Activated CD4-positive, alpha-beta T cell treated with anti-CD3 and anti-CD28 coated beads for 36 hours (primary cell): ENCODE measurements at regions of chr3 and their contacts with region 1.

Region 1: GRCh38 chr3:196942226-196942914 is at the start of gene NCBP2:
- DNase-seq: peak; percentile 100
- ATAC-seq: peak; percentile 97
- H3K4me3 Mint-ChIP-seq: peak within 1 kb of the TSS; percentile 93
- H3K27ac Mint-ChIP-seq: peak within 1 kb of the TSS; percentile 99
- H3K4me1 Mint-ChIP-seq: peaks cover 45% of the 10 kb centered on the region
- H3K27me3 Mint-ChIP-seq: no peaks in the 10 kb centered on the region
- total RNA-seq, gene NCBP2: 94.8 to 107 TPM

Region 2: GRCh38 chr3:196081791-196082618 is 860.4 kb before region 1 on chr3 and contains the start of gene TFRC:
- CTCF ChIA-PET with region 1: no interaction called
- POLR2A ChIA-PET with region 1: no interaction called
- intact Hi-C with region 1: loop called in 1 of 2 experiments (anchors 2 kb)
- DNase-seq: peak; percentile 98
- ATAC-seq: peak; percentile 92
- H3K4me3 Mint-ChIP-seq: peak within 1 kb of the TSS; percentile 95
- H3K27ac Mint-ChIP-seq: peak within 1 kb of the TSS; percentile 93
- H3K4me1 Mint-ChIP-seq: peaks cover 30% of the 10 kb centered on the region
- H3K27me3 Mint-ChIP-seq: no peaks in the 10 kb centered on the region
- total RNA-seq, gene TFRC: 373 to 520 TPM

Region 3: GRCh38 chr3:196632046-196632751 is 310.2 kb before region 1 on chr3:
- CTCF ChIA-PET with region 1: no interaction called
- POLR2A ChIA-PET with region 1: interaction called, 3 read pairs
- intact Hi-C with region 1: loop called in 1 of 2 experiments (anchors 5 kb)
- DNase-seq: peak; percentile 93
- ATAC-seq: peak; percentile 80
- H3K4me3 Mint-ChIP-seq: peak overlapping the region; percentile 81
- H3K27ac Mint-ChIP-seq: peak overlapping the region; percentile 95
- H3K4me1 Mint-ChIP-seq: peaks cover 55% of the 10 kb centered on the region
- H3K27me3 Mint-ChIP-seq: no peaks in the 10 kb centered on the region

Region 4: DNA sequence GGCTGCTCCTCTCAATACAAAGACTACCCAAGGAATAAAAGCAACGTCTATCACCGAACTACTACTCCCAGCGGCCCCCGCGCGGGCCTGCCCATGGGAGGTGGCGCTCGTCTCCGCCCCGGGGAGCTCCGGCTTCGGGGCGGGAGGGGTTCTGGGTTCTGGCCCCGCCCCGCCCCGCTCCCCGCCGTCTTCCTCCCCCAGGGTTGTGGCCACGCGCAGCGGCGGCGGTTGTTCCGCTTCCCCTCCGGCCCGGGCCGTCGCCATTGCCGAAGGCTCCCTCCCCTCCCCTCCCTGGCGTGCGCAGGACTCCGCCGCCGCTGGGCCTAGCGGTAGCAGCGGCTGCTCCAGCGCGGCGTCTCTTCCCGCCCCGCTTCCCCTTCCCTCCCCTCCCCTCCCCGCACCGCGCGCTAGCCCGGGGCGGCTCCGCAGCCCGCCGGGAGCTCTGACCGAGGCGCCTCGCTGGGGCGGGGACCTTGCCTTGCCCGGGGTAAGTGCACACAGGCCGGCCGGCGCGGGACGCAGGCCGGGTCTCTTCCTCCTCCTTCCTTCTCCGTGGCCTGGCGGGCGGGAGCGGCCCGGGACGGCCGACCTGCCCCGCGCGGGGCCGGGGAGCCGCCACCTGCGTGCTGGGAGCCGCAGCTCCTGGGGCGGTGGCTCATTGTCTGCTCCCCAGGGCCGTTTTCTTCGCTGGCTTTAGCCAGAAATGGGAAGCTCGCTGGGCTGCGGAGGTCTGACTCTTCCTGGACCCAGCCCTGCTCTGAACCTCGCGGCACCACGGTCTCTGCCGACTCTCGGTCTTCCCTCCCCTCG is 202.5 kb before region 1 on chr3 and contains the start of gene PAK2:
- CTCF ChIA-PET with region 1: no interaction called
- POLR2A ChIA-PET with region 1: no interaction called
- intact Hi-C with region 1: loop called in 1 of 2 experiments (anchors 1 kb)
- DNase-seq: peak; percentile 94
- ATAC-seq: peak; percentile 92
- H3K4me3 Mint-ChIP-seq: peak within 1 kb of the TSS; percentile 93
- H3K27ac Mint-ChIP-seq: peak within 1 kb of the TSS; percentile 99
- H3K4me1 Mint-ChIP-seq: peaks cover 25% of the 10 kb centered on the region
- H3K27me3 Mint-ChIP-seq: no peaks in the 10 kb centered on the region
- total RNA-seq, gene PAK2: 57.6 to 82.2 TPM

Region 5: DNA sequence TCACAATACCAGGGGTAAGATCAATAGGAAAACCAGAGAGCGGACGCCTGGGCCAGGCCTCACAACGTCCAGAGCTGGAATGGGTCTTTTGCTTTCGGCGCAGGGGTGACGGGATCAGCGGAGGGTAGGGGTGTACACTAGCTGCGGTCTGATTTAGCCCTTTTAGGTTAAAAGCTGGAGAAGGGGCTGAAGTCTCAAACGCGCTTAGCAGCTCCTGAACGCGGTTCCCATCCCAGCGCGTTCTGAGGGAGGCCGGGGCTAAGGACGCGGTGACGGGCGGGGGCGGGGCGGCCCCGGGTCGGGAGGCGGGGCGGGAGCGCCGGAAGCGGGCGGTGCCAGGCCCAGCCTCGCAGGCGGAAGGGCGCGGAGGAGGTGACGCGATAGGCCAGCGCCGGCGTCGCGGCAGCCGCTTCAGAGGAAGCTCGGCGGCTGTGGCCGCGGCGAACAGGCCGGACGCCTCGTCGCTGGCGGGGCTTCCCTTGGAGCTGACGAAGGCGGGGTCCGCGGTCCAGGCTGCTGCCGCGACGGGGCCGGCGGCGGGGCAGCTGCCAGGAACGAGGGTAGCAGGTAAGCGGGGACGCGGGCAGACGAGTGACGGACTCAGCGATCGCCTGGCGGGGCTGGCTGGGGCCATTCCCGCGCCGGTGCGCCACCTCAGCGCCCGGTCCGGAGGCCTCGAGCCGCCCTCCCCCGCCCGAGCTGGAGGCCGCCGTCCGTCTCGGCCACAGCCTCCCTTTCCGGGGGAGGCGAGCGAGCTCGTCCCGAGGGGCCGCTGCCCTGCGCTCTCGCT is 74.7 kb before region 1 on chr3 and contains the start of gene SENP5:
- CTCF ChIA-PET with region 1: interaction called, 18 read pairs
- POLR2A ChIA-PET with region 1: interaction called, 14 read pairs
- intact Hi-C with region 1: loop called (anchors 1 kb)
- DNase-seq: peak; percentile 95
- ATAC-seq: peak; percentile 96
- H3K4me3 Mint-ChIP-seq: peak within 1 kb of the TSS; percentile 99
- H3K27ac Mint-ChIP-seq: peak within 1 kb of the TSS; percentile 95
- H3K4me1 Mint-ChIP-seq: peaks cover 24% of the 10 kb centered on the region
- H3K27me3 Mint-ChIP-seq: no peaks in the 10 kb centered on the region
- total RNA-seq, gene SENP5: 27.7 to 33.0 TPM

Region 6: GRCh38 chr3:197002701-197003454 is 60.5 kb after region 1 on chr3:
- CTCF ChIA-PET with region 1: no interaction called
- POLR2A ChIA-PET with region 1: no interaction called
- intact Hi-C with region 1: loop called in 1 of 2 experiments (anchors 1 kb)
- DNase-seq: peak; percentile 90
- ATAC-seq: peak; percentile 81
- H3K4me3 Mint-ChIP-seq: peak overlapping the region; percentile 71
- H3K27ac Mint-ChIP-seq: no peak overlapping the region
- H3K4me1 Mint-ChIP-seq: peaks cover 9% of the 10 kb centered on the region
- H3K27me3 Mint-ChIP-seq: no peaks in the 10 kb centered on the region

Region 7: GRCh38 chr3:197554562-197555280 is 612.4 kb after region 1 on chr3:
- CTCF ChIA-PET with region 1: no interaction called
- POLR2A ChIA-PET with region 1: no interaction called
- intact Hi-C with region 1: loop called in 1 of 2 experiments (anchors 1 kb)
- DNase-seq: peak; percentile 98
- ATAC-seq: peak; percentile 97
- H3K4me3 Mint-ChIP-seq: peak overlapping the region; percentile 84
- H3K27ac Mint-ChIP-seq: peak overlapping the region; percentile 89
- H3K4me1 Mint-ChIP-seq: peaks cover 10% of the 10 kb centered on the region
- H3K27me3 Mint-ChIP-seq: peaks cover 13% of the 10 kb centered on the region